Activated naive CD4-positive, alpha-beta T cell treated with anti-CD3 and anti-CD28 coated beads, Interleukin-2, amount 10 ng/mL, durations not matched to agents 7 days and 5 days (primary cell): ENCODE measurements at regions of chr20 and their contacts with region 1.

Region 1: GRCh38 chr20:39049684-39050554 is 87.8 kb downstream of the DHX35 start:
- DNase-seq: peak; percentile 83
- H3K4me3 Mint-ChIP-seq: peak overlapping the region; percentile 72
- H3K27ac Mint-ChIP-seq: peak overlapping the region; percentile 70
- H3K4me1 Mint-ChIP-seq: peaks cover 7% of the 10 kb centered on the region
- H3K27me3 Mint-ChIP-seq: peaks cover 16% of the 10 kb centered on the region

Region 2: GRCh38 chr20:38805502-38805957 is 244.4 kb before region 1 on chr20 and contains the start of gene PPP1R16B:
- CTCF ChIA-PET with region 1: no interaction called
- DNase-seq: peak; percentile 89
- H3K4me3 Mint-ChIP-seq: peak within 1 kb of the TSS; percentile 87
- H3K27ac Mint-ChIP-seq: peak within 1 kb of the TSS; percentile 99
- H3K4me1 Mint-ChIP-seq: peaks cover 69% of the 10 kb centered on the region
- H3K27me3 Mint-ChIP-seq: peaks cover 4% of the 10 kb centered on the region

Region 3: GRCh38 chr20:38920851-38921250 is 129.1 kb before region 1 on chr20:
- CTCF ChIA-PET with region 1: interaction called, 54 read pairs
- DNase-seq: no peak
- H3K4me3 Mint-ChIP-seq: no peak overlapping the region
- H3K27ac Mint-ChIP-seq: no peak overlapping the region
- H3K4me1 Mint-ChIP-seq: peaks cover 3% of the 10 kb centered on the region
- H3K27me3 Mint-ChIP-seq: no peaks in the 10 kb centered on the region

Region 4: DNA sequence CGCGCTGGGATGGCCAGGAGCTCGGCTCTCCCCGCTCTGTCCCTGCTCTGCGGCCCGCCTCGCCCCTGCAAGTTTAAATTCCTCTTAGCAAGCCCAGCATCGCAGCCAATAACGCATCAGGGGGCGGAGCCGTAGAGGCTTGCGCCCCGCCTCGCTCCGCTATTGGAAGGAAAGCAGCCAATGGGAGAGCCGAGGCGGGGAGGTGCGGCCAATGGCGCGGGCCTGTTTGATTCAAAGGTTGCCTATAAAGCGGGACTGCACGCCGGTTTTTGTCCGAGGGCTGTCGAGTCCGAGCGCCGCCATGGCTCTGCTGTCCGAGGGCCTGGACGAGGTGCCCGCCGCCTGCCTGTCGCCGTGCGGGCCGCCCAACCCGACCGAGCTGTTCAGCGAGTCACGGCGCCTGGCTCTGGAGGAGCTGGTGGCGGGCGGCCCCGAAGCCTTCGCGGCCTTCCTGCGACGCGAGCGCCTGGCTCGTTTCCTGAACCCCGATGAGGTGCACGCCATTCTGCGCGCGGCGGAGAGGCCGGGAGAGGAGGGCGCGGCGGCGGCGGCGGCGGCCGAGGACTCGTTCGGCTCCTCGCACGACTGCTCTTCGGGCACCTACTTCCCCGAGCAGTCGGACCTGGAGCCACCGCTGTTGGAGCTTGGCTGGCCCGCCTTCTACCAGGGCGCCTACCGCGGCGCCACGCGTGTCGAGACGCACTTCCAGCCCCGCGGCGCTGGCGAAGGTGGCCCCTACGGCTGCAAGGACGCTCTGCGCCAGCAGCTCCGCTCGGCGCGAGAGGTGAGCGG is 123.6 kb before region 1 on chr20 and contains the start of gene FAM83D:
- CTCF ChIA-PET with region 1: interaction called, 54 read pairs
- DNase-seq: peak; percentile 98
- H3K4me3 Mint-ChIP-seq: peak within 1 kb of the TSS; percentile 77
- H3K27ac Mint-ChIP-seq: peak within 1 kb of the TSS; percentile 73
- H3K4me1 Mint-ChIP-seq: peaks cover 42% of the 10 kb centered on the region
- H3K27me3 Mint-ChIP-seq: no peaks in the 10 kb centered on the region

Region 5: GRCh38 chr20:38962044-38962927 is 87.6 kb before region 1 on chr20 and contains the start of gene DHX35:
- CTCF ChIA-PET with region 1: interaction called, 16 read pairs
- DNase-seq: peak; percentile 99
- H3K4me3 Mint-ChIP-seq: peak within 1 kb of the TSS; percentile 96
- H3K27ac Mint-ChIP-seq: peak within 1 kb of the TSS; percentile 90
- H3K4me1 Mint-ChIP-seq: peaks cover 33% of the 10 kb centered on the region
- H3K27me3 Mint-ChIP-seq: no peaks in the 10 kb centered on the region

Region 6: GRCh38 chr20:39036011-39036410 is 13.9 kb before region 1 on chr20:
- CTCF ChIA-PET with region 1: interaction called, 36 read pairs
- DNase-seq: no peak
- H3K4me3 Mint-ChIP-seq: no peak overlapping the region
- H3K27ac Mint-ChIP-seq: no peak overlapping the region
- H3K4me1 Mint-ChIP-seq: no peaks in the 10 kb centered on the region
- H3K27me3 Mint-ChIP-seq: no peaks in the 10 kb centered on the region

Region 7: DNA sequence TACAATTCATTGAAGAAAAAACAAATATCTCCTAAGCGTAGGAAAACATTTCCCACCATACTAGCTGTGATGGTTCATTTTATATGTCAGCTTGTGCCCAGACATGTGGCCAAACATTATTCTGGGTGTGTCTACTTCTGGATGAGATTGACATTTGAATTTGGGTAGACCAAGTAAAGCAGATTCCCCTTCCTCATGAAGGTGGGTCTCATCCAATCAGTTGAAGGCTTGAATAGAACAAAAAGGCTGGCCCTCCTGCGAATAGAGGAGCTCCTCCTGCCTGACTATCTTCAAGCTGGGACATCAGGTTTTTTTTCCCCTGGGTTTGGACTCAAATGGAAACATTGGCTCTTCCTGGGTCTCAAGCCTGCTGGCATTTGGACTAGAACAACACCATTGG is 25.8 kb after region 1 on chr20:
- CTCF ChIA-PET with region 1: interaction called, 96 read pairs
- DNase-seq: no peak
- H3K4me3 Mint-ChIP-seq: no peak overlapping the region
- H3K27ac Mint-ChIP-seq: no peak overlapping the region
- H3K4me1 Mint-ChIP-seq: peaks cover 2% of the 10 kb centered on the region
- H3K27me3 Mint-ChIP-seq: peaks cover 36% of the 10 kb centered on the region

Region 8: GRCh38 chr20:39081255-39081654 is 31.3 kb after region 1 on chr20:
- CTCF ChIA-PET with region 1: interaction called, 96 read pairs
- DNase-seq: peak; percentile 89
- H3K4me3 Mint-ChIP-seq: no peak overlapping the region
- H3K27ac Mint-ChIP-seq: no peak overlapping the region
- H3K4me1 Mint-ChIP-seq: peaks cover 2% of the 10 kb centered on the region
- H3K27me3 Mint-ChIP-seq: peaks cover 40% of the 10 kb centered on the region